B cell (primary cell): ENCODE measurements at regions of chr22 and their contacts with region 1.

Region 1: GRCh38 chr22:23281406-23282088 is 101.2 kb downstream of the BCR start:
- DNase-seq: peak; percentile 87
- ATAC-seq: peak; percentile 75
- H3K4me3 ChIP-seq: no peak overlapping the region
- H3K4me3 Mint-ChIP-seq: no peak overlapping the region
- H3K27ac ChIP-seq: no peak overlapping the region
- H3K27ac Mint-ChIP-seq: no peak overlapping the region
- H3K4me1 ChIP-seq: peaks cover 14 to 22% of the 10 kb centered on the region in 2 donors
- H3K4me1 Mint-ChIP-seq: peaks cover 23% of the 10 kb centered on the region
- H3K27me3 ChIP-seq: no peaks in the 10 kb centered on the region
- H3K27me3 Mint-ChIP-seq: no peaks in the 10 kb centered on the region
- CTCF ChIP-seq: peak; percentile 89

Region 2: DNA sequence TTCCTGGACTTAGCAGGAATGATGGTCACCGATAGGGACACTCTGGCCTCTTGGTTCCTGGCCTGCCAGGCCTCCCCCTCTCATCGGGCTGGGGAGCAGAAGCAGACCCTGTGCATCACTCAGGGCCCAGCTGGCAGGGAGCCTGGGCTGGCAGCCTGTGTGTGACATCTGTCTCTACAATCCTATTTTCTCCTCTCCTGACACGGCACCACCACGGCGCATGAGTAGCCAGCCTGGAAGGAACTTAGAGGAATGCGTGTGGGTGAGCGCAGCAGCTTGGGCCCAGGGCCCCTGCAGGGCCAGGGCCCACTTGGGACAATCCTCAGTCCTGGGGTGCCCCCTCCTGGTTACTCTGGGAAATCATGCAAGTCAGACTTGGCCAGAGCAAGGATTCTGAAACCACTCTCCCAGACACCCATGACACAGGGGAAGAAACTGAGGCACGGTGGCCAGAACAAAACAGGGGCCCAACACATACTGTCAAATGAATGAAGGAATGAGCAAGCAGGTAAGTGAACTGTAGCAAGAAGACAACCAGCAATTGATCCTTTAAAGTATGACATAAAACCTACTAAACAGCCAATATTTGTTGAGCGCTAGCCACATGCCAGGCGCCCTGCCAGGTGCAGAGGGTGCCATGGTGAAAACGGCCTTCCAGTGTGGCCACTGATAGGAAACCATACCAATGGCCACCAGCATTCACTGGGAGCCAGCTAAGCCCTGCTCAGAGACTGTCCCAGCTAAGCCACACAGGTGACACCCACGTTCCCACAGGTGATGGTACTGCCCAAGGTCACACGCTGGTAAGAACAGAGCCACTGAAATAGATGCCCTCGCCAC is 153.1 kb before region 1 on chr22:
- CTCF ChIA-PET with region 1: interaction called, 9 read pairs
- POLR2A ChIA-PET with region 1: no interaction called
- intact Hi-C with region 1: loop called (anchors 1 kb)
- DNase-seq: peak; percentile 84
- ATAC-seq: peak; percentile 94
- H3K4me3 ChIP-seq: no peak overlapping the region
- H3K4me3 Mint-ChIP-seq: no peak overlapping the region
- H3K27ac ChIP-seq: no peak overlapping the region
- H3K27ac Mint-ChIP-seq: peak overlapping the region; percentile 18
- H3K4me1 ChIP-seq: no peaks in the 10 kb centered on the region
- H3K4me1 Mint-ChIP-seq: peaks cover 4% of the 10 kb centered on the region
- H3K27me3 ChIP-seq: no peaks in the 10 kb centered on the region
- H3K27me3 Mint-ChIP-seq: no peaks in the 10 kb centered on the region
- CTCF ChIP-seq: peak; percentile 90

Region 3: GRCh38 chr22:23207729-23208393 is 73.7 kb before region 1 on chr22:
- CTCF ChIA-PET with region 1: interaction called, 17 read pairs
- POLR2A ChIA-PET with region 1: interaction called, 3 read pairs
- intact Hi-C with region 1: no loop called
- DNase-seq: peak; percentile 65
- ATAC-seq: peak; percentile 86
- H3K4me3 ChIP-seq: no peak overlapping the region
- H3K4me3 Mint-ChIP-seq: peak overlapping the region; percentile 65
- H3K27ac ChIP-seq: no peak overlapping the region
- H3K27ac Mint-ChIP-seq: peak overlapping the region; percentile 86
- H3K4me1 ChIP-seq: peaks cover 25 to 30% of the 10 kb centered on the region in 2 donors
- H3K4me1 Mint-ChIP-seq: peaks cover 36% of the 10 kb centered on the region
- H3K27me3 ChIP-seq: no peaks in the 10 kb centered on the region
- H3K27me3 Mint-ChIP-seq: peaks cover 5% of the 10 kb centered on the region
- CTCF ChIP-seq: no peak

Region 4: GRCh38 chr22:23219822-23220484 is 61.6 kb before region 1 on chr22:
- CTCF ChIA-PET with region 1: interaction called, 17 read pairs
- POLR2A ChIA-PET with region 1: interaction called, 3 read pairs
- intact Hi-C with region 1: loop called (anchors 2 kb)
- DNase-seq: peak; percentile 65
- ATAC-seq: peak; percentile 83
- H3K4me3 ChIP-seq: peak overlapping the region; percentile 16 to 41 (median 31)
- H3K4me3 Mint-ChIP-seq: peak overlapping the region; percentile 84
- H3K27ac ChIP-seq: peak overlapping the region; percentile 38 to 72
- H3K27ac Mint-ChIP-seq: peak overlapping the region; percentile 93
- H3K4me1 ChIP-seq: peaks cover 70 to 79% of the 10 kb centered on the region in 2 donors
- H3K4me1 Mint-ChIP-seq: peaks cover 82% of the 10 kb centered on the region
- H3K27me3 ChIP-seq: no peaks in the 10 kb centered on the region
- H3K27me3 Mint-ChIP-seq: no peaks in the 10 kb centered on the region
- CTCF ChIP-seq: no peak

Region 5: DNA sequence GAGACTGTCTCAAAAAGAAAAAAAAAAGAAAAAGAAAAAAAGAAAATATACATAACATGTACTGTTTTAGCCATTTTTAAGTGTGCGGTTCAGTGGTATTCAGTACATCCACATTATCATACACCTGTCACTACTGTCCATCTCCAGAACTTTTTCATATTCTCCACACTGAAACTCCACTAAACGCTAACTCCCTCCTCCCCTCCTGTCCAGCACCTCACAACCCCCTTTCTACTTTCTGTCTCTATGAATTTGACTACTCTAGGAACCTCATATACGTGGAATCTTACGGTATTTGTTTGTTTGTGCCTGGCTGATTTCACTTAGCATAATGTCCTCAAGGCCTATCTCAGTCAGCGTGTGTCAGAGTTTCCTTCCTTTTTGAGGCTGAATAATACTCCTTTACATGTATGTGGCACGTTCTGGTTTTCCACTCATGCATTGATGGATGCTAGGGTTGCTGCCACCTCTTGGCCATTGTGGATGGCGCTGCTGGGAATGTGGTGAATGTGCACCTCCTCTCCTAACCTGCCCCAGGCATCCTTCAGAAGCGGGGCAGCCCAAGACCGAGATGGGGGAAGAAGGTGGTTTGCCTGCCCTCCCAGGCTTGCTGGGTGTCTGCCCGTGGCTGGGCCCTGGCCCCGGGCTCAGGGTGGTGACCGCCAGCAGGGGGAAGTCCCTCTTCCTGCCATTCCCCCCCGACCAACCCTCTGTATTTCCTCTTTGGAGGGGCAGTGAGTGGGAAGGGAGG is 40.7 kb before region 1 on chr22:
- CTCF ChIA-PET with region 1: interaction called, 23 read pairs
- POLR2A ChIA-PET with region 1: no interaction called
- intact Hi-C with region 1: loop called (anchors 5 kb)
- DNase-seq: peak; percentile 45
- ATAC-seq: peak; percentile 51
- H3K4me3 ChIP-seq: no peak overlapping the region
- H3K4me3 Mint-ChIP-seq: peak overlapping the region; percentile 5
- H3K27ac ChIP-seq: peak overlapping the region in 1 of 2 donors; percentile 7
- H3K27ac Mint-ChIP-seq: peak overlapping the region; percentile 4
- H3K4me1 ChIP-seq: peaks cover 27 to 41% of the 10 kb centered on the region in 2 donors
- H3K4me1 Mint-ChIP-seq: peaks cover 40% of the 10 kb centered on the region
- H3K27me3 ChIP-seq: no peaks in the 10 kb centered on the region
- H3K27me3 Mint-ChIP-seq: no peaks in the 10 kb centered on the region
- CTCF ChIP-seq: no peak

Region 6: DNA sequence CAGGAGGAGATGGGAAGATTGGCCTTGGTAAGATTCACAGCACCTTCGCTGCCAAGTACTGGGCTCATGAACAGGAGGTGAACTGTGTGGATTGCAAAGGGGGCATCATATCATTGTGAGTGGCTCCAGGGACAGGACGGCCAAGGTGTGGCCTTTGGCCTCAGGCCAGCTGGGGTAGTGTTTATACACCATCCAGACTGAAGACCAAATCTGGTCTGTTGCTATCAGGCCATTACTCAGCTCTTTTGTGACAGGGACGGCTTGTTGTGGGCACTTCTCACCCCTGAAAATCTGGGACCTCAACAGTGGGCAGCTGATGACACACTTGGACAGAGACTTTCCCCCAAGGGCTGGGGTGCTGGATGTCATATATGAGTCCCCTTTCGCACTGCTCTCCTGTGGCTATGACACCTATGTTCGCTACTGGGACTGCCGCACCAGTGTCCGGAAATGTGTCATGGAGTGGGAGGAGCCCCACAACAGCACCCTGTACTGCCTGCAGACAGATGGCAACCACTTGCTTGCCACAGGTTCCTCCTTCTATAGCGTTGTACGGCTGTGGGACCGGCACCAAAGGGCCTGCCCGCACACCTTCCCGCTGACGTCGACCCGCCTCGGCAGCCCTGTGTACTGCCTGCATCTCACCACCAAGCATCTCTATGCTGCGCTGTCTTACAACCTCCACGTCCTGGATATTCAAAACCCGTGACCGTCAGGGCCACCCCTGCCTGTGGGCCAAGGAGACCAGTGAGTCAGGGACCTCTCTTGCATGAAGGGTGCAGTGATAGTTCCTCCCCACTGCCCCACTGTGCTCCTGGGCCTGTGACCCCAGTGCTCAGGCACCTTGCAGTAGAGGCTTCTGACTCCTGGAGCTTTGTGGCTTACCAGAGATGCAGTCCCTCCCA is 17.6 kb before region 1 on chr22:
- CTCF ChIA-PET with region 1: interaction called, 10 read pairs
- POLR2A ChIA-PET with region 1: no interaction called
- intact Hi-C with region 1: no loop called
- DNase-seq: peak; percentile 57
- ATAC-seq: peak; percentile 85
- H3K4me3 ChIP-seq: no peak overlapping the region
- H3K4me3 Mint-ChIP-seq: no peak overlapping the region
- H3K27ac ChIP-seq: peak overlapping the region; percentile 26 to 40
- H3K27ac Mint-ChIP-seq: peak overlapping the region; percentile 78
- H3K4me1 ChIP-seq: peaks cover 5 to 10% of the 10 kb centered on the region in 2 donors
- H3K4me1 Mint-ChIP-seq: peaks cover 11% of the 10 kb centered on the region
- H3K27me3 ChIP-seq: no peaks in the 10 kb centered on the region
- H3K27me3 Mint-ChIP-seq: no peaks in the 10 kb centered on the region
- CTCF ChIP-seq: no peak